Dorsolateral prefrontal cortex (tissue), 120 donors: ENCODE measurements at regions of chr2 and their contacts with region 1.

Region 1: DNA sequence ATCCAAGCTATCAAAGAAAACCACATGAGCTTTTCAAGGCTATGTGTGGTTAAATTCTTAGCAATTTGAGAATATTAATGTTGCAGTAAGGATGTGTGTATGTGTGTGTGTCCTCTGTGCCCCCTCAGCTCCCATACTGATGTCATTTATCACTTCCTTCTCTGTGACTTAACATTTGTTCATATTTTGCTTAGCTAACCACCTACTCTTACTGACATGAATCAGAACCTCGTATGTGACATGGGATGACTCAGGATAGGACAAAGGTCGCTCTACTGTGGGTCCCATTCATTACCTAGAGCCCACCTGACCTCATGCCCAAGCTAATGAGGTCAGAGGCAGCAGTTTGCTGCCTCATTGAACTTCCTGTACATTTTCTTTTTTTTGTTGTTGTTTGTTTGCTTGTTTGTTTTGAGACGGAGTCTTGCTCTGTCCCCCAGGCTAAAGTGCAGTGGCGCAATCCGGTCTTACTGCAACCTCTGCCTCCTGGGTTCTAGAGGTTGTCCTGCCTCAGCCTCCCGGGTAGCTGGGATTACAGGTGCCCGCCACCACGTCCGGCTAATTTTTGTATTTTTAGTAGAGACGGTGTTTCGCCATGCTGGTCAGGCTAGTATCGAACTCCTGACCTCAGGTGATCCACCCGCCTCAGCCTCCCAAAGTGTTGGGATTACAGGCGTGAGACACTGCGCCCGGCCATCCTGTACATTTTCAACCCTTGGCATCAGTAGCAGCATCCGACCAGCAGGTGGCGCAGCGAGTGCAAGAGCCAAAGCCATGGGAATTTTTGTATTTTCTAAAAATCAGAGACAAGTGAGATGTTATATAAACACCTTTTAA is 36.4 kb downstream of the MOGAT1 start:
- DNase-seq: peak; percentile 64 to 91 (median 84)
- H3K4me3 ChIP-seq: peak overlapping the region in 22 of 59 donors; percentile 6 to 51 (median 27)
- H3K27ac ChIP-seq: peak overlapping the region in 18 of 59 donors; percentile 11 to 86 (median 77)
- H3K27me3 ChIP-seq: no peaks in the 10 kb centered on the region
- CTCF ChIP-seq: peak; percentile 94 to 100 (median 98)

Region 2: GRCh38 chr2:222641336-222641735 is 66.6 kb before region 1 on chr2:
- intact Hi-C with region 1: no loop called
- DNase-seq: no peak
- H3K4me3 ChIP-seq: no peak overlapping the region
- H3K27ac ChIP-seq: no peak overlapping the region
- H3K27me3 ChIP-seq: no peaks in the 10 kb centered on the region
- CTCF ChIP-seq: no peak

Region 3: GRCh38 chr2:222690564-222691200 is 17.2 kb before region 1 on chr2:
- intact Hi-C with region 1: loop called in 1 of 2 experiments (anchors 1 kb)
- DNase-seq: peak; percentile 22 to 78 (median 68)
- H3K4me3 ChIP-seq: peak overlapping the region in 5 of 59 donors; percentile 4 to 27 (median 13)
- H3K27ac ChIP-seq: no peak overlapping the region
- H3K27me3 ChIP-seq: no peaks in the 10 kb centered on the region
- CTCF ChIP-seq: peak; percentile 63 to 100 (median 98)

Region 4: GRCh38 chr2:222797261-222797660 is 89.4 kb after region 1 on chr2:
- intact Hi-C with region 1: loop called in 1 of 2 experiments (anchors 5 kb)
- DNase-seq: no peak
- H3K4me3 ChIP-seq: no peak overlapping the region
- H3K27ac ChIP-seq: peak overlapping the region in 54 of 59 donors; percentile 28 to 82 (median 64)
- H3K27me3 ChIP-seq: no peaks in the 10 kb centered on the region
- CTCF ChIP-seq: peak; percentile 10 to 67 (median 49)

Region 5: DNA sequence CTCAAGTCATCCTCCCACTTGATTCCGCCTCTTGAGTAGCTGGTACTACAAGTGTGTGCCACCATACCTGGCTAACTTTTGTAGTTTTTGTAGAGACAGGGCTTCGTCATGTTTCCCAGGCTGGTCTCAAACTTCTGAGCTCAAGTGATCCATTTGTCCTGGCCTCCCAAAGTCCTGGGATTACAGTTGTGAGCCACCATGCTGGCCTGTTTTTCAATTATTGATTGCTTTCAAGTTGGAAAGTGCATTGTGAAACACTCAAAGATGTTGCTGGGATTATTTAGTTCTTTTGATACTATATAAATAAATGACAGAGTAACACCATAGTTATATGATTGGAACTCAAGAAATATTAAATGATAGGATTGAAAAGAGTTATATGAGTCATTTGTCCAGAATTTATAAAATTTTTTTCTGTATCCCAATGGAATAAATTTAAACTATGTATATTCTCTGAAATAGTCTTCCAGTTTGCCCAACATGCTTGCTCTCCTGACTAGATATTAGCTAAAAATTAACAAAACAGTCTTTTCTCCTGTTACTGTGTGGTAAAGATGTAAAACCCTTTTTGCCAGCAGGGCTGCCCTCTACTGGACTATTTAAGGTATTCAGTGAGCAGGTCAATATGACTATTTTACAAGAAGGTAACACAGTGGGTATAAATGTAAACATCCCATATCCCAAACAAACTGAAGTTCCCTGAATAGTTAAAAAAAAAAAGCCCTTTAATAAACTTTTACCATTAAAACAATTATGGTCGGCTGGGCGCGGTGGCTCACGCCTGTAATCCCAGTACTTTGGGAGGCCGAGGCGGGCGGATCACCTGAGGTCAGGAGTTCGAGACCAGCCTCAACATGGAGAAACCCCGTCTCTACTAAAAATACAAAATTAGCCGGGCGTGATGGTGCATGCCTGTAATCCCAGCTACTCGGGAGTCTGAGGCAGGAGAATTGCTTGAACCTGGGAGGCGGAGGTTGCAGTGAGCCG is 195.6 kb after region 1 on chr2:
- intact Hi-C with region 1: loop called (anchors 5 kb)
- DNase-seq: peak in 1 of 10 donors; percentile 54
- H3K4me3 ChIP-seq: no peak overlapping the region
- H3K27ac ChIP-seq: peak overlapping the region in 29 of 59 donors; percentile 1 to 77 (median 45)
- H3K27me3 ChIP-seq: no peaks in the 10 kb centered on the region
- CTCF ChIP-seq: peak; percentile 46 to 80 (median 66)